ENCODE measurements at regions of chr18 and their contacts with region 1.

Region 1: DNA sequence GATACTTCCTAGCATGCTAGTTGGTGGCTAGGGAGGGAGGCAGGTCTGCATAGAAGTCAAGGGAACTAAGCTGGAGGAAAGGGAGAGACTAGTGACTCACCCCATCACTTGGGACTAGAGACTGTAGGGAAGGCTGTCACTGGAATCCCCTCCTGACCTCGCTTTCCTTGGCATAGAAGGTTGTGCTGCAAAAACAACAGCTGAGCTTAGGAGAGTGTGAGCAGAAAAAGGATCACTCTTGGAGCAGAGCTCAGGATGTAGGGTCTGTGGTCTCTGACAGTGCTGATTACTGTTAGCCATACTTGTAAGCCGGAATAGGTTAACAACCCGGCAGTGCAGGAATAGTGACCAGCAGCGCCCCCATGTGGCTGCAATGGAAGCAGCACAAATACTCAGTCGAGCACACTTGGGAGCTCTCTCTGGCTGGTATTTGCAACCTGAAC is 66.9 kb upstream of the SMAD2 start:
- DNase-seq: peak; percentile 49
- ATAC-seq: no peak
- H3K4me3 Mint-ChIP-seq: no peak overlapping the region
- H3K27ac Mint-ChIP-seq: no peak overlapping the region
- H3K4me1 Mint-ChIP-seq: peaks cover 4% of the 10 kb centered on the region
- H3K27me3 Mint-ChIP-seq: no peaks in the 10 kb centered on the region

Region 2: GRCh38 chr18:47772374-47773248 is 224.7 kb before region 1 on chr18:
- CTCF ChIA-PET with region 1: interaction called, 24 read pairs
- POLR2A ChIA-PET with region 1: no interaction called
- DNase-seq: peak; percentile 67
- ATAC-seq: peak; percentile 64
- H3K4me3 Mint-ChIP-seq: no peak overlapping the region
- H3K27ac Mint-ChIP-seq: no peak overlapping the region
- H3K4me1 Mint-ChIP-seq: peaks cover 2% of the 10 kb centered on the region
- H3K27me3 Mint-ChIP-seq: peaks cover 16% of the 10 kb centered on the region

Region 3: DNA sequence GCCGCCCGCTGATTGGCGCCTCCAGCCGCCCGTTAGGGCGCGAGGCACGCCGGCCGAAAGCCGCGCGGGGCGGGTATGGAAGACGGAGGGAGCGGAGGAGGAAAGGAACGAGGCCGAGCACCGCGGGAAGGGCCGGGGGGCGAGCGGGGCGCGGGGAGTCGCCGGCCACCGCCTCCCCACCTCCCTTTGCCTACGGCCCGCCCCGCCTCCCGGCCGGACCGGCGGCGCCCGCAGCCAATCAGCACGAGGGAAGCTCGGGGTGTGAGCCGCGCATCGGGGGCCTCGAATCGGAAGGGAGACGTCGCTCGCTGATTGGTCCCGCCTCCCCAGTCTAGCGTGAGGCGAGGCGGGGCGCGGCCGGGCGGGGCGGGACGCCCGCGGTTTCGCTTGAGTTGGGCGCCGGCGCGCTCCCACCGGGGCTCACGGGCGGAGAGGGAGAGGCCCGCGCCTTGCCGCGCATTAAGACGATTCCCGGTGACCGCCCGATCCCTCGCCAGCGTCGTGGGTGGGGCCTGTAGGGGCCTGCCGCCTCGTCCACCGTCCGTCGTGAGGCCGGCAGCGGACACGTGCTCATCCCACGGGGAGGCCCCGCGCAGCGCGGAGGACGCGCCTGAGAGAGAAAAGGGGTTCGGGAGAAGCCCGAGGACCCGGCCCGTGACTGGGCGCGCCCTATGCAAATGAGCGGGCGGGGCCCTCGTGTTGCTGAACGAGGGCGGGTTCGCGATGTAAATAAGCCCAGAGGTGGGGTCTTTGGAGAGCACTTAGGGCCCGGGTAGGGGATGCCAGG is 66.2 kb before region 1 on chr18:
- CTCF ChIA-PET with region 1: interaction called, 13 read pairs
- POLR2A ChIA-PET with region 1: no interaction called
- DNase-seq: peak; percentile 96
- ATAC-seq: peak; percentile 84
- H3K4me3 Mint-ChIP-seq: peak overlapping the region; percentile 73
- H3K27ac Mint-ChIP-seq: peak overlapping the region; percentile 86
- H3K4me1 Mint-ChIP-seq: peaks cover 43% of the 10 kb centered on the region
- H3K27me3 Mint-ChIP-seq: peaks cover 10% of the 10 kb centered on the region

Region 4: DNA sequence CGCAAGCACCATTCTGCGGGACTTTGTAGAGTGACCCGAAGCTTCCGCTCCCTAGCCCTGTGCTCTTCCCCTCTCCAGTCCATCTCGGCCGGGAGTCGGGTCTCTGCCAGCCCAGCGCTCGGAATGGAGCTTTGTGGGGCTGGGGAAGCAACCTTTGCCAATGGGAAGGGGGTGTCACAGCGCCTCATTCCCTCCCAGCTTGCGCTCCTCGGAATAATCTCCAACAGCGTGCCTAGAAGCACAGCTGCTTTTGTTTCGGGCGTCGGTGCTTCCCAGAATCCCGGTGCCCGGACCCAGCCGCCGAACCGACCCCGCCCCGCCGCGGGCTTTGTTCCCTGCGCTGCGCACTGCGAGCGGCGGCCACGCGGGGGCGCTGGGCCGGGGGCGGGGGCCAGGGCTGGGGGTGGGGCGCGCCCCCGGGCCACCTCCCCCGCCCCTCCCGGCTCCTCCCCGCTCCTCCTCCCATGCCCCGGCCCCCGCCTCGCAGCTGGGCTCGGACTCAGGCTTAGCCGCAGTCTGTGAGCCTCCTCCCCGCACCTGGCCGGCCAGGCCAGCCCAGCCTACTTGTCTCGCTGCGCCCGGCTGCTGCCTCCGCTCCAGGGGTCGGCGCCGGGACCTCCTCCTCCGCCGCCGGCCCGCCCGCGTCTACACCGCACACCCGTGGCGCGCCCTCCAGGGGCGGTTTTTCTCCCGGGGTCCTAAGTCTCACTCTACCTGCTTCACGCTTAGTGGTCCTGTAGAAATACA is 10.8 kb after region 1 on chr18:
- CTCF ChIA-PET with region 1: interaction called, 14 read pairs
- POLR2A ChIA-PET with region 1: no interaction called
- DNase-seq: peak; percentile 51
- ATAC-seq: peak; percentile 81
- H3K4me3 Mint-ChIP-seq: peak overlapping the region; percentile 60
- H3K27ac Mint-ChIP-seq: no peak overlapping the region
- H3K4me1 Mint-ChIP-seq: peaks cover 17% of the 10 kb centered on the region
- H3K27me3 Mint-ChIP-seq: peaks cover 37% of the 10 kb centered on the region

Region 5: GRCh38 chr18:48059455-48060010 is 62.2 kb after region 1 on chr18:
- CTCF ChIA-PET with region 1: no interaction called
- POLR2A ChIA-PET with region 1: no interaction called
- DNase-seq: no peak
- ATAC-seq: no peak
- H3K4me3 Mint-ChIP-seq: no peak overlapping the region
- H3K27ac Mint-ChIP-seq: no peak overlapping the region
- H3K4me1 Mint-ChIP-seq: no peaks in the 10 kb centered on the region
- H3K27me3 Mint-ChIP-seq: peaks cover 36% of the 10 kb centered on the region

Measured in activated CD8-positive, alpha-beta T cell treated with anti-CD3 and anti-CD28 coated beads, Interleukin-2, amount 10 ng/mL, durations not matched to agents 7 days and 5 days (primary cell).